ENCODE measurements at regions of chr13 and their contacts with region 1.

Region 1: GRCh38 chr13:40922437-40923040 is 96.6 kb downstream of the ELF1 start:
- DNase-seq: no peak
- ATAC-seq: no peak
- H3K4me3 Mint-ChIP-seq: peak overlapping the region; percentile 66
- H3K27ac Mint-ChIP-seq: peak overlapping the region; percentile 69
- H3K4me1 Mint-ChIP-seq: peaks cover 24% of the 10 kb centered on the region
- H3K27me3 Mint-ChIP-seq: no peaks in the 10 kb centered on the region
- CTCF ChIP-seq: no peak

Region 2: DNA sequence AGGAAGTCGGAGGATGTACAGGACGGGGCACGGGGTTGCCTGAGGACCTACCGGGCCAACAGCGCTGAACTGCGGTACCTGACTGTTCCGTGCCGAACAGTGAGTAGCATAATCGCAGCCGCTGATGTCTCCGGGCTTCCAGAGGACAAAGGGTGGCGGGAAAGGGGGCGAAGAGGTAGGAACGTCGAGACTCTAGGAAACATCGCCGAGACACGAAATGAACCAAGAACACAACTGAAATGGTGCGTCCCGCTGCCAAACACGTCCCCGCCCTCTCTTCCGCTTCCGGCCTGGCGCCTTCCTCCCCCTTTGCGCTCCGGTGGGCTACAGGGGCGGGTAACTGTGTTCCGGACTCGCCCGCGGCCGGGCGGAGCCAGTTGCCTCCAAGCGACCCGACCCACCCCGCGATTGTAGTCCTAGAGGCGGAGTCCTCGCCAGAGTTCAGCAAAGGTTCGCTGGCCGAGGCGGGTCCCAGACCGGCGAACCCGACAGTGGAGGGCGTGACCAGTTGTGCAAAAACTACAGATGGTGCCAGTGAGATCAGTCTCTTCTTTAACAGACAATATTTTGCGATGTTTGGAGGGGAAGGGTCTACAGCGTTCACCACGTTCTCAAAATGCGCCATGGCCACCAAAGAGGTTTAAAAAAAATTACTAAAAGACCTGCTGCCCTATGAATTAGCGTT is 151.5 kb before region 1 on chr13 and contains the start of gene MRPS31:
- CTCF ChIA-PET with region 1: no interaction called
- POLR2A ChIA-PET with region 1: interaction called, 7 read pairs
- intact Hi-C with region 1: loop called (anchors 1 kb)
- DNase-seq: peak; percentile 94
- ATAC-seq: peak; percentile 100
- H3K4me3 Mint-ChIP-seq: peak within 1 kb of the TSS; percentile 98
- H3K27ac Mint-ChIP-seq: peak within 1 kb of the TSS; percentile 94
- H3K4me1 Mint-ChIP-seq: peaks cover 30% of the 10 kb centered on the region
- H3K27me3 Mint-ChIP-seq: no peaks in the 10 kb centered on the region
- CTCF ChIP-seq: no peak
- total RNA-seq, gene MRPS31: 29.4 and 30.5 TPM in 2 replicates

Region 3: GRCh38 chr13:40789275-40790133 is 133.0 kb before region 1 on chr13 and contains the start of gene SLC25A15:
- CTCF ChIA-PET with region 1: interaction called, 5 read pairs
- POLR2A ChIA-PET with region 1: interaction called, 15 read pairs
- intact Hi-C with region 1: loop called (anchors 1 kb)
- DNase-seq: peak; percentile 82
- ATAC-seq: peak; percentile 95
- H3K4me3 Mint-ChIP-seq: peak within 1 kb of the TSS; percentile 83
- H3K27ac Mint-ChIP-seq: peak within 1 kb of the TSS; percentile 53
- H3K4me1 Mint-ChIP-seq: peaks cover 9% of the 10 kb centered on the region
- H3K27me3 Mint-ChIP-seq: no peaks in the 10 kb centered on the region
- CTCF ChIP-seq: no peak
- total RNA-seq, gene SLC25A15: 4.6 and 4.9 TPM in 2 replicates

Region 4: DNA sequence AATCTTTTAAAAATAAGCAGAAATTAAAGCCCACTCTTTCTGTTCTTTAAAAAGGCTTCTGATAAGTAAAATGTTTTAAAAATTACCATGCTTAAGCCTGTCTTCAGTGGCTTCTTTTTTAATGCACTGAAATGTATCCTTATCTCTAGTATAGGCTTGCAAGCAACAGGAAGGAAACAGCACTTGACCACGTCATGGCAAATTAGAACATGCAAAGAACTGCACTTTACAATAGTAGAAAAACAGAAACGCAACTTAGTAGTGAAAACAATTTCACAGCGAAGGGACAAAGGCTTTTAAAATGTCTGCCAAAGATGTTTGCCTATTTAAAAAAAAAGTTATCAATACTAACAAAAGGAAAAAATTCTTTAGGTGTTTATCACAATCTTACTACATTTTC is 60.2 kb after region 1 on chr13:
- CTCF ChIA-PET with region 1: no interaction called
- POLR2A ChIA-PET with region 1: no interaction called
- intact Hi-C with region 1: loop called (anchors 1 kb)
- DNase-seq: no peak
- ATAC-seq: peak; percentile 64
- H3K4me3 Mint-ChIP-seq: peak overlapping the region; percentile 87
- H3K27ac Mint-ChIP-seq: peak overlapping the region; percentile 86
- H3K4me1 Mint-ChIP-seq: peaks cover 80% of the 10 kb centered on the region
- H3K27me3 Mint-ChIP-seq: no peaks in the 10 kb centered on the region
- CTCF ChIP-seq: no peak

Region 5: DNA sequence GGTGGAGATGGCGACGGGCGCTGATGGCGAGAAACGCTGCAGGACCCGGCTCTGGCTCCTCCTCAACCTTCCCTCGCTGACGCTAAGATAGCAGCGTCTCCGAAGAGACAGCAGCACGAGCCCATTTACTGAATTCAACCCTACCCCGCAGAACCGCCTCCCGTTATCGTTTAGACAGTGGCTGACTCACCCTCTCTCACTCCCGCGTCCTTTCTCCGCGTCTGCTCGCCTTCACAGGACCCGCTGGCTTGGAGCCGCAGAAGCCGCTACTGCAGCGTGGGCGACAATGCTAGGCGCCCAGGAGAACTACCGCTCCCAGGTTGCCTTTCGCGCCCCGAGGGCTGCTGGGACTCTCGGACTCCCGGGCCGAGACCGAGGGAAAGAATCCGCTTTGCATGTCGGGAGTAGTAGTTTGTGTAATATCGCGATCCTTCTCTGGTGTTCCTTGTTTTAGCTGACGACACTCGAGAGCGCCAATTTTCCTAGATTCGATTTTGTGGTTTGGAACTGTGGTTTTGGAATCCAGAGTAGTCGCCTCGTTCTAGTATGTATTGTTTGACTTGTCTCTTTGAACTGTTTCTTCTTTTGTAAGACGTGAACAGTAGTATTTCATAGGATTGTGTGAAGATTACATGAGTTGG is 210.1 kb after region 1 on chr13 and contains the start of gene KBTBD6:
- CTCF ChIA-PET with region 1: no interaction called
- POLR2A ChIA-PET with region 1: interaction called, 3 read pairs
- intact Hi-C with region 1: loop called (anchors 5 kb)
- DNase-seq: peak; percentile 83
- ATAC-seq: peak; percentile 97
- H3K4me3 Mint-ChIP-seq: peak within 1 kb of the TSS; percentile 98
- H3K27ac Mint-ChIP-seq: peak within 1 kb of the TSS; percentile 91
- H3K4me1 Mint-ChIP-seq: peaks cover 47% of the 10 kb centered on the region
- H3K27me3 Mint-ChIP-seq: no peaks in the 10 kb centered on the region
- CTCF ChIP-seq: no peak
- total RNA-seq, gene KBTBD6: 5.1 and 6.0 TPM in 2 replicates

Region 6: GRCh38 chr13:41299316-41300094 is 377.0 kb after region 1 on chr13:
- CTCF ChIA-PET with region 1: no interaction called
- POLR2A ChIA-PET with region 1: no interaction called
- intact Hi-C with region 1: no loop called
- DNase-seq: no peak
- ATAC-seq: no peak
- H3K4me3 Mint-ChIP-seq: no peak overlapping the region
- H3K27ac Mint-ChIP-seq: no peak overlapping the region
- H3K4me1 Mint-ChIP-seq: no peaks in the 10 kb centered on the region
- H3K27me3 Mint-ChIP-seq: no peaks in the 10 kb centered on the region
- CTCF ChIP-seq: no peak

Region 7: GRCh38 chr13:41546372-41547190 is 624.0 kb after region 1 on chr13:
- CTCF ChIA-PET with region 1: no interaction called
- POLR2A ChIA-PET with region 1: no interaction called
- intact Hi-C with region 1: no loop called
- DNase-seq: no peak
- ATAC-seq: no peak
- H3K4me3 Mint-ChIP-seq: no peak overlapping the region
- H3K27ac Mint-ChIP-seq: no peak overlapping the region
- H3K4me1 Mint-ChIP-seq: no peaks in the 10 kb centered on the region
- H3K27me3 Mint-ChIP-seq: peaks cover 4% of the 10 kb centered on the region
- CTCF ChIP-seq: no peak

Region 8: GRCh38 chr13:42039946-42040729 is 1117.6 kb after region 1 on chr13:
- CTCF ChIA-PET with region 1: no interaction called
- POLR2A ChIA-PET with region 1: no interaction called
- intact Hi-C with region 1: loop called (anchors 10 kb)
- DNase-seq: peak; percentile 78
- ATAC-seq: peak; percentile 82
- H3K4me3 Mint-ChIP-seq: peak overlapping the region; percentile 90
- H3K27ac Mint-ChIP-seq: peak overlapping the region; percentile 84
- H3K4me1 Mint-ChIP-seq: peaks cover 16% of the 10 kb centered on the region
- H3K27me3 Mint-ChIP-seq: peaks cover 6% of the 10 kb centered on the region
- CTCF ChIP-seq: no peak